ENCODE measurements at regions of chr1 and their contacts with region 1.

Region 1: DNA sequence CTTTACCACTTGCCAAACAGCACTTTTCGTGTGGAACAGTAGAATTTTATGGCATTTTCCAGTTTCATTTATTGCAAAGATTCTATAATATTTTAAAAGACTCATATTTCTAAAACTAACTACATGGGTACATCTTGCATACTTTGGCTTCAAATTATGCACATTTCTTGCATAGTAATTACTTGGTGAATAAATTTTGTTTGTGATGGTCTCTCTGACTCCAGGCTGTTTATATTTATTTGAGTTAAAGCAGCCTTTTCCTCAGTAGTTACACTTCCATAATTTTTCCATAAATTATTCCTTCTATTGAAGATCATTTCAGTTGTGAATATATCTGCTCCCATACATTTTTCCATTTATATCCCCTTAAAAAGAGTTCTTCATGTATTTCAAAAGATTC is 6.9 kb upstream of the NHLH2 start:
- DNase-seq: no peak
- H3K4me3 ChIP-seq: no peak overlapping the region
- CTCF ChIP-seq: no peak
- POLR2A ChIP-seq: no peak

Region 2: DNA sequence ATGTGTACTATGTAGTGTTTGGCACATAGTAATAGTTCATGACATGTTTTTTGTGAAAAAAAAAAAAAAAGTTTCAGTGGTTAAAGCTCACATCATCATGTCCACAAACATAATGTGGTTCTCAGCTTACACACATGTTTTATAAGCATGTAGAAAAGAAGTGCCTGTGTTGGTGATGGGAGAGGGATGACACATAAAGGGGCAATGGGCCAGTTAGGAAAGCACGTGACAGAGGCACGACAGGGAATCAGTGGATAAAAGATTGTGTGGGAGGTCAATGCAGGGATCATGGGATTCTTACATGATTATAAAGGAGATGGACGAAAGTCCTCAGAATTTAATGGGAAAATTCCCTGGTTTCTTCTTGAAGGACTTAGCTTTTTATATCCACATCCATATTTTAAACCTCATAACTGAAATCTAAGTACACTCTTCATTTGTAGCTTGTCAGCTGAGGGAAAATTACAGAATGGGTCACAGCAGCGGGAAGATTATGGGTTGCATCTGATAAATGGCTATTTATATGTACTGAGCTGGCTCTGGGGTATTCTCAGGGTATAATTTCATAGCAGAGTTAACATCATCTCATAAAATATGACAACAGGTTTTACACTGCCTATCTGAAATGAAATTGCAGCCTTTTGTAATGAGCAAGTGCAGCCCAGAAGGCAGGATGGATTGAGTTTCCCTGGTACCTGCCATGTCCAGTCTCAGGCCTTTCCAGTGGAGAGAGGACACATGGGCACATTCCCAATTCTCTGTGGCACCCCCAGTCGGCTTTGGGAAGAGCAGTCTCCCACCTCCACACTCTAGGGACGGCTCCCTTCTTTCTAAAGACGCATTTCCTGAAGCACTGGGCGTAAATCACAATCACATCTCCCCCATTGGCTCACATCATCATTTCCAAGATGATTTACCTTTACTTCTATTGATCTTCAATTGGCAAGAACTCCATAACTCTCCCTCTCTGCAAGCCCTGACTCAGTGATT is 35.4 kb after region 1 on chr1:
- intact Hi-C with region 1: loop called (anchors 2 kb)
- DNase-seq: no peak
- H3K4me3 ChIP-seq: no peak overlapping the region
- CTCF ChIP-seq: no peak
- POLR2A ChIP-seq: no peak

Measured in lower leg skin (tissue), 4 donors.